ENCODE measurements at regions of chr16 and their contacts with region 1.

Region 1: GRCh38 chr16:17211797-17212196 is 259.0 kb downstream of the XYLT1 start:
- DNase-seq: peak; percentile 24

Region 2: GRCh38 chr16:17369421-17370222 is 157.8 kb after region 1 on chr16:
- intact Hi-C with region 1: loop called (anchors 10 kb)
- DNase-seq: peak; percentile 86